Naive thymus-derived CD4-positive, alpha-beta T cell (primary cell): ENCODE measurements at regions of chr22 and their contacts with region 1.

Region 1: GRCh38 chr22:25564320-25564978 is at the start of gene GRK3:
- DNase-seq: peak; percentile 30 to 73 (median 55)
- ATAC-seq: peak; percentile 74
- H3K4me3 ChIP-seq: peak within 1 kb of the TSS; percentile 57
- H3K4me3 Mint-ChIP-seq: peak within 1 kb of the TSS; percentile 89 to 99 (median 96)
- H3K27ac ChIP-seq: peak within 1 kb of the TSS; percentile 55
- H3K27ac Mint-ChIP-seq: peak within 1 kb of the TSS; percentile 29 to 94 (median 79)
- H3K4me1 ChIP-seq: peaks cover 4 to 11% of the 10 kb centered on the region in 2 donors
- H3K4me1 Mint-ChIP-seq: peaks cover 18 to 56% (median 38%) of the 10 kb centered on the region in 7 donors
- H3K27me3 ChIP-seq: no peaks in the 10 kb centered on the region
- H3K27me3 Mint-ChIP-seq: peaks cover 0 to 20% (median 0%) of the 10 kb centered on the region in 5 donors
- total RNA-seq, gene GRK3: 5.6 to 44.8 (median 6.5) TPM

Region 2: DNA sequence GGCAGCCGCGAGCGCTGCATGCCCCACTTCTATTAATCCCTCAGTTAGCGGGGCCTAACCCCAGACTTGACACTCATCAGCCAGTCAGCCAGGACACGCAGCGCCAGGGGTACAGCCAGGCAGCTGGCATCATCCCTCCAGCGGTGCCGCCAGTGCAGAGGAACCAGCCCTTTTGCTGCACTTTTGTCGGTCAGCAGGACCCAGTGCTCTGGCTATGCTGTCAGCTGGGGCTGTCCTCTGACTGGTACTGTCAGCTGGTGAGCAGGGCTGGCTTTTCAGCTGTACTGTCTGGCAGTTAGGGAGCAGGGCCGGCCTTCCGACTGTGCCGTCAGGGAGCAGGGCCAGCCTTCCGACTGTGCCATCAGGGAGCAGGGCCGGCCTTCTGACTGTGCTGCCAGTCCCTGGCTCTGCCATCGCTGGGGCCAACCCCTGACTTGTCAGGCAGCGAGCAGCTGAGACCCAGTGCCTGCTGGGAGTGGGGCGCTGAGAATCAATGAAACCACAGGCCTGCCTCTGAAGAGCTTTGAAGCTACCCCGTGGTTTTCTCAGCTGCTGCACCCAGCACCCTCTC is 496.5 kb before region 1 on chr22:
- CTCF ChIA-PET with region 1: no interaction called
- POLR2A ChIA-PET with region 1: no interaction called
- intact Hi-C with region 1: loop called in 1 of 2 experiments (anchors 5 kb)
- DNase-seq: peak; percentile 56 to 95 (median 92)
- ATAC-seq: peak; percentile 94
- H3K4me3 ChIP-seq: peak overlapping the region; percentile 43
- H3K4me3 Mint-ChIP-seq: peak overlapping the region; percentile 81 to 94 (median 87)
- H3K27ac ChIP-seq: peak overlapping the region; percentile 76
- H3K27ac Mint-ChIP-seq: peak overlapping the region; percentile 86 to 99 (median 98)
- H3K4me1 ChIP-seq: peaks cover 63 to 67% of the 10 kb centered on the region in 2 donors
- H3K4me1 Mint-ChIP-seq: peaks cover 51 to 96% (median 89%) of the 10 kb centered on the region in 7 donors
- H3K27me3 ChIP-seq: no peaks in the 10 kb centered on the region
- H3K27me3 Mint-ChIP-seq: no peaks in the 10 kb centered on the region

Region 3: DNA sequence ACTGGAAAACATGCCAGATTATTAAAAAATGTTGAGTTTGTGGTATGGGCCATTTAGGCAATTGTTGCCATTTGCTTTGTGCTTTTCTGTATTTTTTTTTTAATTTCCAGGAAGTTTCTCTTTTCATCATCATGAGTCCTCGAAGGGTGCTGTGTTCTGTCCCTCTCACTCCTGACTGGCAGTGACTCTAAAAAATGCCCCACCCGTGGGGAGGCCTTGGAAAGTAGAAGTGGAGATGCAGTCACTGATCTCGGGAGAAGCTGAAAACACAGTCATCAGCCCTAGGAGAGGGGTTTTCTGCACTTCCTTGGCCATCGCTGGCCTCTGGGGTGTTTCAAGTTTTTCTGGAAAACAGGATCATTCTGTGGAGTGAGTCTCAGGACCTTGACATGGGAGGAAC is 98.5 kb before region 1 on chr22:
- CTCF ChIA-PET with region 1: no interaction called
- POLR2A ChIA-PET with region 1: no interaction called
- intact Hi-C with region 1: loop called in 1 of 2 experiments (anchors 10 kb)
- DNase-seq: no peak
- ATAC-seq: no peak
- H3K4me3 ChIP-seq: no peak overlapping the region
- H3K4me3 Mint-ChIP-seq: no peak overlapping the region
- H3K27ac ChIP-seq: no peak overlapping the region
- H3K27ac Mint-ChIP-seq: peak overlapping the region in 1 of 9 donors; percentile 24
- H3K4me1 ChIP-seq: no peaks in the 10 kb centered on the region
- H3K4me1 Mint-ChIP-seq: peaks cover 0 to 16% (median 4%) of the 10 kb centered on the region in 7 donors
- H3K27me3 ChIP-seq: no peaks in the 10 kb centered on the region
- H3K27me3 Mint-ChIP-seq: no peaks in the 10 kb centered on the region

Region 4: DNA sequence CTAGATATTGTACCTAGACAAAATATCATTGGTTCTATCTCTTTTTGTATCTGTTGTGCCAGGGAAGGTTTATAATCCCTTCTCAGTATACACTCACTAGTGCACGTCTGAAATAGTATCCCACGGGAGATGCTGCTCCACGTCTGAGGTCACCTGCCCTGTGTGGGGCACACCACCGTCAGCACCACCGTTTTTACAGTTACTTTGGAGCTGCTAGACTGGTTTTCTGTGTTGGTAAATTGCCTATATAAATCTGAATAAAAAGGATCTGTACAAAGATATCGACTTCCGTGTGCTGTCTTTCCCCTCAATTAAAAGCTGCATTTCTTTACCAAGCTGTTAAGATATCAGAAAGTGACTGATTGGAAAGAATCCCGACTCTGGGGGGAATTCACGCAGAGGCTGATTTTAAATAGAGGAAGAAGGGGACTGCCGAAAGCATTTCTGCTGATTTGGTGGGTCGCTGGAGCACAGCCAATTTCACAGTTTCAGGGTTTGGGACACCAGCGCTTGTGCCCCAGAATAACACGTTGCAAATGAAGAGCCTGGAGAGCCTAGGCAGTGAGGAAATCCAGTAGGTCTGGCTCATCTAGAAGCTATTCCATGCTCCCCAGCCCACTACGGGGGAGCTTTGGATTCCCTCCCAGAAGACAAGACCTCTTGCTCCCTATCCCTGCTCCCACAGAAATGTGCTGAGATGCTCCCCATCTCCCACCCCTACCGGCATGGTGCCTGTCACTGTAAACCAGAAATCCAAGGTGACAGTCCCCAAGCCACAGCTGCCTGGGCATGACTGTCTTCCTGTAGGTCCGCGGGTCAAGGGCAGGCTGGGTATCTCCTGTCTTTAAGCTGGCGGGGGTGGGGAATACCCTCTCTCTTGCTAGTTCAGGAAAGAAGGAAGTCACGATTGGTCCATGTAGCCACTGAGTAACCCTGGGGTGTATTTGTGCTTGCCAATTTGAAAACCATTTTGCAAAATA is 164.9 kb after region 1 on chr22:
- CTCF ChIA-PET with region 1: no interaction called
- POLR2A ChIA-PET with region 1: no interaction called
- intact Hi-C with region 1: no loop called
- DNase-seq: peak in 1 of 9 donors; percentile 17
- ATAC-seq: no peak
- H3K4me3 ChIP-seq: no peak overlapping the region
- H3K4me3 Mint-ChIP-seq: no peak overlapping the region
- H3K27ac ChIP-seq: no peak overlapping the region
- H3K27ac Mint-ChIP-seq: peak overlapping the region in 1 of 9 donors; percentile 34
- H3K4me1 ChIP-seq: no peaks in the 10 kb centered on the region
- H3K4me1 Mint-ChIP-seq: peaks cover 0 to 45% (median 0%) of the 10 kb centered on the region in 7 donors
- H3K27me3 ChIP-seq: no peaks in the 10 kb centered on the region
- H3K27me3 Mint-ChIP-seq: peaks cover 0 to 3% (median 0%) of the 10 kb centered on the region in 5 donors

Region 5: GRCh38 chr22:25772288-25772687 is 207.8 kb after region 1 on chr22:
- CTCF ChIA-PET with region 1: no interaction called
- POLR2A ChIA-PET with region 1: no interaction called
- intact Hi-C with region 1: loop called in 1 of 2 experiments (anchors 2 kb)
- DNase-seq: no peak
- ATAC-seq: no peak
- H3K4me3 ChIP-seq: no peak overlapping the region
- H3K4me3 Mint-ChIP-seq: peak overlapping the region in 1 of 10 donors; percentile 58
- H3K27ac ChIP-seq: no peak overlapping the region
- H3K27ac Mint-ChIP-seq: peak overlapping the region in 2 of 9 donors; percentile 14 to 89
- H3K4me1 ChIP-seq: no peaks in the 10 kb centered on the region
- H3K4me1 Mint-ChIP-seq: peaks cover 0 to 55% (median 5%) of the 10 kb centered on the region in 7 donors
- H3K27me3 ChIP-seq: no peaks in the 10 kb centered on the region
- H3K27me3 Mint-ChIP-seq: peaks cover 0 to 10% (median 4%) of the 10 kb centered on the region in 5 donors